ENCODE measurements at regions of chr11 and their contacts with region 1.

Region 1: DNA sequence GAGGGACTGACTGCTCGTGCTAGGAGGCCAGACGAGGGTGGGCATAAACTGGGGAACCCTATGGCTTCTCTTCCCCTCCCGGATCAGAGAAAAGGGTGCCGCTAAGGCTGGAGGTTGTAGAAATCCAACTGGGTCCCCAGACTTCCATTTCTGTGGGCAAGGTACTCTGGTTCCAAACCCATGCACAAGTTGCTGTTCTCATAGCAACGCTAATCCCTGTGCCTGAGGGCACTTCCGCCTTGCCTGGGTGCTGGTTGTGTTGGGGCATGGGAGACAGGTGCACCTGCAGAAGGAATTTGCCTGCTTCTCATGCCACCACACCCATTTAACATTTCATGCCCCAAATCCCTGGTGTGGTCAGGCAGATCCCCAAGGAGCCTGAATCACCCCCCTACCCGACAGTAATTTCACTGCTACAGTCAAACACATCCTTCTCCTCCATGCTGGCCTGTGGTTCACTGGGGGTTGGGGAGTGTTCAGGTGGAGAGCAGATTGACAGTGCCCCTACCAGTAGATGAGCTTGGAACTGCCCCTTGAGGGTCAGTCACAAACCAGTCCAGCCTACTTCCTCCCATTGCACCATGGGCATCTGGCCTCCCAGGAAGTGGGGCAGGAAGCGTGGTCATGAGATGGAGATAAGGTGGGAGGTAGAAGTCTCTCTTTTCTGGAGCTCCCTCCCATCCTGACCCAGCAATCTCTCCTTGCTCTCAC is 1.2 kb downstream of the C2CD2L start:
- DNase-seq: peak; percentile 71
- H3K4me3 ChIP-seq: peak overlapping the region; percentile 93
- H3K27ac ChIP-seq: peak overlapping the region; percentile 41
- H3K4me1 ChIP-seq: peaks cover 26% of the 10 kb centered on the region
- CTCF ChIP-seq: no peak

Region 2: DNA sequence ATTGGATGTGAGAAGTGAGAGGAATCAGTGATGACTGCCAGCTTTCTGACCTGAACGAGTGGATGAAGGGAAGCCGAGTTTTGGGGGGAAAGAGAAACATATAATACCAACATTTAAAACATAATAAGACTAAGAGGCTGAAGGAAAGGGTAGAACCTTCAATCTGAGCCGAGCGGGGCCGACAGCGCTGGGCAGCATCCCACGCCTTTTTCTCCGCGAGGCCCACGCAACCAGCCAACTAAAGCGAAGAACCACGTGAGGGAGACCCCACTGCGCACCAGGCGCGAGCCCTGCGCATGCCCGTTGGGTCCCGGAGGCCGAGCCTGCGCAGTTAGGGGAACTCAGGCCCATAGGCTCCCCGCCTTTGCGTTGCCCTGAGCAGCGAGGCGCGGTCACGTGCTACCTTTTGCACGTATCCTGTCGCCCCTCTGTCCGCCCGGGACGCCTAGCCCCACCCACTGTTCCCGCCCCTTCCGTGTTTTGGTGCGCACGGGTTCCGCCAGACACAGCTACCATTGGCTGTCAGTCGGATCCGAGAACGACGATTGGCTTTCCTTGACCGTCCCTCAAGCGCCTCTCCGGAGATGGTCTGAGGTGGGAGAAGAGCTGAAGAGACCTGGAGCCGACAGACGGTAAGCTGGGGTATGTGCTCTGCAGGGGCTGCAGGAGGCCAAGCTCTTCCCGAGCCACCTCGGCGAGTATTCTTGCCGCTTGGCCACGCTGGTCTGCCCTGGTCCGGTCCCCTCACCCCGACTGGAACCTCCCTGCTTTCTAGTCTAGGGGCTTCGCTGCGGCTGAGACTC is 12.9 kb after region 1 on chr11 and contains the start of gene HINFP:
- CTCF ChIA-PET with region 1: interaction called, 7 read pairs
- POLR2A ChIA-PET with region 1: interaction called, 12 read pairs
- intact Hi-C with region 1: loop called (anchors 1 kb)
- DNase-seq: peak; percentile 99
- H3K4me3 ChIP-seq: peak within 1 kb of the TSS; percentile 84
- H3K27ac ChIP-seq: no peak within 1 kb of the TSS
- H3K4me1 ChIP-seq: peaks cover 16% of the 10 kb centered on the region
- CTCF ChIP-seq: no peak
- total RNA-seq, gene HINFP: 18.2 and 27.7 TPM in 2 replicates

Measured in OCI-LY7 (cell line).